ENCODE measurements at regions of chr3 and their contacts with region 1.

Region 1: GRCh38 chr3:198046120-198046857 is 86.3 kb downstream of the LMLN start:
- DNase-seq: no peak
- ATAC-seq: peak; percentile 72
- H3K4me3 Mint-ChIP-seq: no peak overlapping the region
- H3K27ac Mint-ChIP-seq: no peak overlapping the region
- H3K4me1 Mint-ChIP-seq: no peaks in the 10 kb centered on the region
- H3K27me3 Mint-ChIP-seq: no peaks in the 10 kb centered on the region; the same call in 1 of the 2 replicates
- CTCF ChIP-seq: no peak

Region 2: DNA sequence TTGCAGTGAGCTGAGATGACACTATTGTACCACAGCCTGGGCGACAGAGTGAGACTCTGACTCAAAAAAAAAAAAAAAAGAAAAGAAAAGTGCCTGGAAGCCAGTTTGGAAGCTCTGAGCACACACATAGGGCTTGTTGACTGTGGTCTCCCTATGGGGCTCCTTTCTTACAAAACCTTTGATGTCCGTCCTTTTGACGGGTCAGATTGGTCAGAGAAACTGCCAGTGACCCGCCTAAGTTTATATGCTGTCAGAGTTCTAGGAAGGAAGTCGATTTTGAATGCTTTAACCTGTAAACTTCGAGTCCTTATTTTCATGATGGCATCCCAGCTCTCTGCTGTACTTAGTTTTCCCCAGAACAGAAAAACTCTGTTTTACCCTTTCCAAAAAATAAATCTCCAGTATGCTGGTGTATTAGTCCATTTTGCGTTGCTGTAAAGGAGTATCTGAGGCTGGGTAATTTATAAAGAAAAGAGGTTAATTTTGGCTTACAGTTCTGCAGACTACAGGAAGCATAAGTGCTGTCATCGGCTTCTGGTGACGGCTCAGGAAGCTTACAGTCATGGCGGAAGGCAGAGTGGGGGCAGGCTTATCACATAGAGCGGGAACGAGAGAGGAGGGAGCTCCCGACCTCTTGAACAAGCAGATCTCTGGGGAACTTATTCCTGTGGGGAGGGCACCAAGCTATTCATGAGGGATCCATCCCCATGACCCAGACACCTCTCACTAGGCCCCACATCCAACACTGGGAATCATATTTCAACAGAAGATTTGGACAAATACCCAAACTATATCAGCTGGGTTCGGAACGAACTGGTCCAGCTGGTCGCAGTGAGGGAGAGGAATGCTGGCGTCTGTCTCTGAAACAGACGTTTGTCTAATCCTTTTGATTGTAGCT is 14.0 kb before region 1 on chr3:
- CTCF ChIA-PET with region 1: interaction called, 15 read pairs
- POLR2A ChIA-PET with region 1: no interaction called
- DNase-seq: no peak
- ATAC-seq: peak; percentile 38
- H3K4me3 Mint-ChIP-seq: no peak overlapping the region
- H3K27ac Mint-ChIP-seq: no peak overlapping the region
- H3K4me1 Mint-ChIP-seq: 0 out of 2 replicates have a peak, but pooled peaks cover 2% of the 10 kb centered on the region
- H3K27me3 Mint-ChIP-seq: no peaks in the 10 kb centered on the region
- CTCF ChIP-seq: no peak

Region 3: DNA sequence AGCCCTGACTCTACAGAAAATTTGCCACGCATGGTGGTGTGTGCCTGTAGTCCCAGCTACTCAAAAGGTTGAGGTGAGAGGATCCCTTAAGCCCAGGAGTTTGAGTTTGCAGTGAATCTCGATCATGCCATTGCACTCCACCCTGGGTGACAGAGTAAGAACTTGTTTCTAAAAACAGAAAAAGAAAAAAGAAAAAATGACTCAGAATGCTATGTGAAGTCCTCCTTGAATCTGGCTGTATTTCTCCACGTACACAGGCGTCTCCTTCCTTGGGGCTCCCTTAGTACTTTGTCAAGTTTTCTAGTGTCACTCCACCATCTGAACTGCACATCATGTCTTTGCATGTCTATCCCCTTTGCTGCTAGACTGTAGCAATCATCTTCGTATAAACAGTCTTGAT is 18.1 kb after region 1 on chr3:
- CTCF ChIA-PET with region 1: interaction called, 14 read pairs
- POLR2A ChIA-PET with region 1: no interaction called
- DNase-seq: no peak
- ATAC-seq: no peak
- H3K4me3 Mint-ChIP-seq: no peak overlapping the region
- H3K27ac Mint-ChIP-seq: no peak overlapping the region
- H3K4me1 Mint-ChIP-seq: peaks cover 6% of the 10 kb centered on the region
- H3K27me3 Mint-ChIP-seq: no peaks in the 10 kb centered on the region
- CTCF ChIP-seq: no peak

Region 4: DNA sequence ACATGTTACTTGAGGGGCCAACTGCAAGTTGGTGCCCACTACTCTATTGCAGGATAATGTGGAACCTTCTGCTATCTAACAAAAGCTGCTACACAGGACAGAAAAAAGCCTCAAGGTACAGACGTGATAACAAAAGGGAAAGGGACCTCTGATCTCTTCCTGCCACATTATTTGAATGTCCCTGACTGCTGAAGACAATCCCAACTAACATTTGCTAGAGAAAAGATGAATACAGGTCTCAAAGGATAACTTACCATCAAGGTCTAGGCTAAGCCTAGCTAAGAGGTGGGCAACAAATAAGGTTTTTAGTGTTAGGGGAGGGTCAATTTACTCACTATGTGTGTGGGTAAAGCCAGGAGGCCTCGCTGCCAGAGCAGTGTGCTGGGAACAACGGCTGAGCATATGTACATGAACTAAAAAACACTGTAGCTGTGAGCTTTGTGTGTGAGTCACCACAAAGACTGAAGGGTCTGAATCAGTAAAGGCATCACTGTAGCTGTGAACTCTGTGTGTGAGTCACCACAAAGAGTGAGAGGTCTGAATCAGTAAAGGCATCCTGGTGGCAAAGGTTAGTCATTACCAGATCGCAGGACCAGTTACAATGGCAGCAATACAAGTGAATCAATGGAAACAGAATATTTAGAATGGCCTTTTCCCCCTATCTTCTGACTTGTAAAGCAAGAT is 25.5 kb after region 1 on chr3:
- CTCF ChIA-PET with region 1: interaction called, 10 read pairs
- POLR2A ChIA-PET with region 1: no interaction called
- DNase-seq: no peak
- ATAC-seq: peak; percentile 99
- H3K4me3 Mint-ChIP-seq: no peak overlapping the region
- H3K27ac Mint-ChIP-seq: no peak overlapping the region
- H3K4me1 Mint-ChIP-seq: peaks cover 9% of the 10 kb centered on the region
- H3K27me3 Mint-ChIP-seq: peaks cover 29% of the 10 kb centered on the region
- CTCF ChIP-seq: no peak

Region 5: DNA sequence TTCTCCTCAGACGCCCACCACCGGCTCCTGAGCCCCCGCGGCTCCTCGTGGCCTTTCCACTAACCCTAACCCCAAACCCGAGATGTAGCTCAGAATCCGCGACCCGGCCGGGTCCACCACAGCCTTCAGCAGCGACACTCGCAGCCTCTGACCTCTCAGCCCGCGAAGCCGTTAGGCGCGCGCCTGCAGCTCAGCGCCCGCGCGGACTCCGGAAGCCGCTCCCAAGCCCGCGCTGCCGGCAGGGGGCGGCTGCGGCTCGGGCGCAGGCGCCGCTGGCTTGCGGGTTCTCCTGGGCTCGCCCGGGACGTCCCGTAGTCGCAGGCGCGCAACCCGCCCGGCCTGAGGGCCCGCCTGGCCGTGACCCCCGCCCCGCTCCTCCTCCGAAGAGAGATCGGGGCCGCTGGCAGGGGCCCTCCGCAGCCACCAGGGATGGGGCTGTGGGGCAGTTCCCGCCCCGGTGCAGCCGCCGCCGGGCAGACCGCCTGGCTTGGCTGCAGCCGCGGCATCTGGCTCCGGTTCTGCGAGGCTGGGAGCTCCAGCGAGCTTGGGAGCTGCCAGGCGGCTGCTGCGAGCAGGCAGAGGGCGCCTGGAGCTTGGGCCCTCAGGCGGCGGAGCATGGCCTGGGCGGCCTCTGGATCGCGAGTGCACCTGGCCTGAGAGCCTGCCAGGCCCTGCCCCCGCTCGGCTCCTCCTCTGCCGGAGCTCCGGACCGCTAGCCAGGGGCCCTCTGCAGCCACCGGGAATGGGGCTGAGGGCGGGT is 34.4 kb after region 1 on chr3:
- CTCF ChIA-PET with region 1: interaction called, 22 read pairs
- POLR2A ChIA-PET with region 1: no interaction called
- DNase-seq: peak; percentile 81
- ATAC-seq: peak; percentile 83
- H3K4me3 Mint-ChIP-seq: peak overlapping the region; percentile 72
- H3K27ac Mint-ChIP-seq: no peak overlapping the region
- H3K4me1 Mint-ChIP-seq: peaks cover 8% of the 10 kb centered on the region; the same call in 1 of the 2 replicates
- H3K27me3 Mint-ChIP-seq: peaks cover 85% of the 10 kb centered on the region
- CTCF ChIP-seq: peak; percentile 54; the same call in 1 of the 2 replicates